ENCODE measurements at regions of chr2 and their contacts with region 1.

Region 1: GRCh38 chr2:126657636-126658318 is 1.8 kb downstream of the GYPC start:
- DNase-seq: peak; percentile 72
- H3K4me3 Mint-ChIP-seq: peak overlapping the region; percentile 93
- H3K27ac Mint-ChIP-seq: peak overlapping the region; percentile 97
- H3K4me1 Mint-ChIP-seq: peaks cover 61% of the 10 kb centered on the region
- H3K27me3 Mint-ChIP-seq: no peaks in the 10 kb centered on the region

Region 2: DNA sequence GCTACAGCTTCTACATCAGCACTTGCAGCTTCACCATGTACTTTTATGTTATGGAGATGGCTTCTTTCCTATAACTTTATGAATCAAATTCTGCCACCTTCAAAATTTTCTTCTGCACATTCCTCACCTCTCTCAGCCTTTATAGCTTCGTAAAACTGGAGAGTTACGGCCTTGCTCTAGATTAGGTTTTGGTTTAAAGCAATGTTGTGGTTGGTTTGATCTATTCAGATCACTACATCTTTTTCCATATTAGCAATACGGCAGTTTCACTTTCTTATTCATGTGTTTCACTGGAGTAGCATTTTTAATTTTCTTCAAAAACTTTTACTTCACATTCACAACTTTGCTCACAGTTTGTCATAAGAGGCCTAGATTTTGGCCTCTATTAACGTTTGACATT is 244.7 kb before region 1 on chr2:
- intact Hi-C with region 1: loop called (anchors 2 kb)
- DNase-seq: no peak
- H3K4me3 Mint-ChIP-seq: no peak overlapping the region
- H3K27ac Mint-ChIP-seq: no peak overlapping the region
- H3K4me1 Mint-ChIP-seq: peaks cover 7% of the 10 kb centered on the region
- H3K27me3 Mint-ChIP-seq: peaks cover 26% of the 10 kb centered on the region

Region 3: GRCh38 chr2:126571403-126571802 is 86.4 kb before region 1 on chr2:
- intact Hi-C with region 1: no loop called
- DNase-seq: no peak
- H3K4me3 Mint-ChIP-seq: no peak overlapping the region
- H3K27ac Mint-ChIP-seq: no peak overlapping the region
- H3K4me1 Mint-ChIP-seq: no peaks in the 10 kb centered on the region
- H3K27me3 Mint-ChIP-seq: no peaks in the 10 kb centered on the region

Region 4: GRCh38 chr2:126699716-126700581 is 42.2 kb after region 1 on chr2:
- intact Hi-C with region 1: loop called (anchors 5 kb)
- DNase-seq: no peak
- H3K4me3 Mint-ChIP-seq: no peak overlapping the region
- H3K27ac Mint-ChIP-seq: no peak overlapping the region
- H3K4me1 Mint-ChIP-seq: peaks cover 6% of the 10 kb centered on the region
- H3K27me3 Mint-ChIP-seq: no peaks in the 10 kb centered on the region

Region 5: DNA sequence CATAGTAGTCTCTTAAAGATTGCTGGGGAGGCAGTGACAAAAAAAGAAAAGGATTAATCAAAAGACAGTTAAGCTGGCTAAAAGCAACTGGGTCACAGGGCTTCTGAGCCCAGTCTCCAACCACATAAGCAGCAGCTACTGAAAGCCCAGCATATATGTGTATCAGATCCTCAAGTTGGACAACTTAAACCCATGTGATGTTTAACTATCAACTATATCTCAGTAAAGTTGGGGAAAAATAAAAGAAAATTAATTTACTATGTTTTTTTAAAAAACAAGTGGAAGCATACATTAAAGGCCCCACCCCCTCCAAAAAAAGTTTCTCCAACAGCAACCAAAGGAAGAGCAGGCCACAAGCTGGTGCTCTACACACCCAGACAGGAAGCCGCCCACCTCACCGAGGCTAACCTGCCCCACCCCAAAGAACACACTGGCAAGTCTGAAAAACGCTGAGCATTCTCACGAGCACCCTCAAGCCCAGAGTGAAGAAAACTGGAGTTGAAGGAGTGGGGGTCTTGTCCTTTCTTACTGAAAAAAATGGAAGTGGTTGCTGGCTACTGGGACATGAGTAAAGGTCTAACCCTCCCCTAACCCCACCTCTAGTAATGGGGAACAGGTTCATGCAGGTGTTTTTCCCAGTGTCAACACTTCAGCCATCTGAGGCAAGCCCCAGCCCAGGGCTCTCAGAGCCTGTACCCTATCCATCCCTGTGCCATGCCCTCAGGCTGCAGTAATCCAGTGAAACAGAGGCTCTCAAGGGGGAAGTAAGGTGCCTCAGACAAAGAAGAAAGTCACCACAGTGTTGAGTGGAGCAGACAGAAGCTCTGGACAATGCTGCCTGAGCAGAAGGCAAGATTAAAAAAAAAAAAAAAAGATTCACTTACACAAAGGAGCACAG is 104.5 kb after region 1 on chr2:
- intact Hi-C with region 1: loop called (anchors 2 kb)
- DNase-seq: peak; percentile 31
- H3K4me3 Mint-ChIP-seq: peak overlapping the region; percentile 32
- H3K27ac Mint-ChIP-seq: no peak overlapping the region
- H3K4me1 Mint-ChIP-seq: peaks cover 28% of the 10 kb centered on the region
- H3K27me3 Mint-ChIP-seq: peaks cover 24% of the 10 kb centered on the region

Region 6: DNA sequence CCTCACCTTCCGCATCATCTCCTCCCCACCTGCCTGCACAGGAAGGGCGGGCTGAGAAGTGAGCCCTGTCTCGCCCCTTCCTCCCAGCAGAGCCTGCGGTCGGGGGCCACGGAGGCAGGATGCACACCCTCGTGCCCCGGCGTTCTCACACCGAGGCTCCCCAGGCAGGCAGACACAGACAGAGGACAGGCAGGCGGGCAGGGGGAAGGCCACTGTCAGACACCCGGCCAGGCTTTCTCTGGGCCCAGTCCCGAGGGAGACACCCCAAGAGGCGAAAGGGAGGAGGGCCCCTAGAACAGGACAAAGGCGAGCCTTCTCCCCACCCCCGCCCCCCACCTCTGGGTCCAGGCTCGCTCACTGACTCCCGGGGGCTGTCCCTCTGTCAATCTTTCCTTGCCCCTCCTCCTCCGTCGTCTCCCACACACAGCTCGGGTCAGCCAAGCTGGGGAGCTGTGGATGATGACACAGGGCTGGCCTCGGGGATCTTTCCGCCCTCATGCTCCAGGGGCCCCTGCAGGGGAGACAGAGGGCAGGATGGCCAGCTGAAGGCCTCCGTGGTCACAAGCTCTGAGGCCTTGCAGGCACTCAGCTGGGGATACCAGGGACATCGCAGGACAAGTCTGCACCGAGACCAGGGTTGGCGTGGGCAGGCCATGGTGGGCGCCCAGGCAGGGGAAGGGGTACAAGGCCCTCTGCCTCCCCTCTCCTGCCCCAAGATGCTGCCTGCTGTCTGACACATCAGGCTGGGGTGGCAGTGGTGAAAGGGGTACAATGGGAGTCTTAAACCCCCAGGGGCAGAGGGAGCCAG is 424.3 kb after region 1 on chr2:
- intact Hi-C with region 1: loop called (anchors 5 kb)
- DNase-seq: peak; percentile 74
- H3K4me3 Mint-ChIP-seq: peak overlapping the region; percentile 76
- H3K27ac Mint-ChIP-seq: peak overlapping the region; percentile 90
- H3K4me1 Mint-ChIP-seq: peaks cover 63% of the 10 kb centered on the region
- H3K27me3 Mint-ChIP-seq: no peaks in the 10 kb centered on the region

Measured in activated T-helper 2 cell treated with anti-CD3 and anti-CD28 coated beads, Interferon-gamma antibody, Interleukin-2, Interleukin-4, amounts not matched to agents 10 μg/mL and 5 μg/mL and 100 μg/mL, durations not matched to agents 14 hours and 24 hours and 36 hours (primary cell).